Mammary epithelial cell (primary cell): ENCODE measurements at regions of chr17 and their contacts with region 1.

Region 1: GRCh38 chr17:6110592-6110991 is 40.4 kb downstream of the WSCD1 start:
- DNase-seq: peak; percentile 37
- H3K4me3 ChIP-seq: no peak overlapping the region
- H3K27ac ChIP-seq: no peak overlapping the region
- H3K4me1 ChIP-seq: no peaks in the 10 kb centered on the region
- H3K27me3 ChIP-seq: no peaks in the 10 kb centered on the region
- CTCF ChIP-seq: no peak

Region 2: GRCh38 chr17:6159541-6160228 is 49.1 kb after region 1 on chr17:
- CTCF ChIA-PET with region 1: no interaction called
- dilution Hi-C with region 1: loop called (anchors 5 kb)
- in situ Hi-C with region 1: no loop called
- intact Hi-C with region 1: no loop called
- DNase-seq: no peak
- H3K4me3 ChIP-seq: no peak overlapping the region
- H3K27ac ChIP-seq: no peak overlapping the region
- H3K4me1 ChIP-seq: no peaks in the 10 kb centered on the region
- H3K27me3 ChIP-seq: peaks cover 12% of the 10 kb centered on the region
- CTCF ChIP-seq: no peak

Region 3: DNA sequence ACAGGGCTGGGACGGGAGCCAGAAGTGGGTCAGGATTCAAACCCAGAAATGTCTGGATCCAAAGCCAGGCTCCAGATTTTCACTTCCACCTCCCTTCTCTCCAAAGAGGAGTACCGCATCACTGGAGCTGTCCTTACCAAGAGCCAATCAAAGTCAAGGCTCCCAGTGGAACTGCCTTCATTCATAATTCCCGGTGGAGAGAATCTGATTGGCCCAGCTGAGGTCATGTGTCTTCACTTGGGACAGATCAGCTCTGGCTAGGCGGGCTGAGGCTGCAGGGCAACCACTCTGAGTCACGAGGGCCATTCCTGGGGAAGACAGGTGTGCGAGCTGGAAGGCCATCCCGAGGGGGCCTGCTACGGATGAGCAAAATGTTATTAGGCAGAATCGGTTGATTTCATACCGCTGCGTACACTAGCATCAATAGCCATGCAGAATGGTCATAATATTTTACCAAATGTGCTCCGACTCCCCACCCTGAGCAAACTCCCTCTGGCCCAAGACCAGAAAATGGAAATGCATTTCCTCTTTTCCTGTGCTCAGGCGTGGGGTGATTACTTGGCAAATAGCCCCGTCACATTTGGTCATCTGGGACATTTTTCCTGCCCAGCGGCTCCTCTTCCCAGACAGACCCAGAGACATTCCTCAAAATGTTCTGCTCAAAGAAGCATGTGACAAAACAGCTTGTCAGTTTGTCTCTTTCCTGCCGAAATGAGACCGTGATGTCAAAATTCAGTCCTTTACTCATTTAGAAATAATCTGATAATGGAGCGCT is 213.2 kb after region 1 on chr17:
- CTCF ChIA-PET with region 1: no interaction called
- dilution Hi-C with region 1: loop called (anchors 5 kb)
- in situ Hi-C with region 1: no loop called
- intact Hi-C with region 1: no loop called
- DNase-seq: peak; percentile 8
- H3K4me3 ChIP-seq: no peak overlapping the region
- H3K27ac ChIP-seq: no peak overlapping the region
- H3K4me1 ChIP-seq: no peaks in the 10 kb centered on the region
- H3K27me3 ChIP-seq: peaks cover 1% of the 10 kb centered on the region
- CTCF ChIP-seq: no peak